GM12878 (cell line): ENCODE measurements at regions of chr11 and their contacts with region 1.

Region 1: GRCh38 chr11:118198370-118198769 is 21.9 kb upstream of the SCN2B start:
- DNase-seq: no peak
- ATAC-seq: peak; percentile 94
- H3K4me3 ChIP-seq: no peak overlapping the region
- H3K27ac ChIP-seq: no peak overlapping the region
- H3K4me1 ChIP-seq: no peaks in the 10 kb centered on the region
- H3K27me3 ChIP-seq: no peaks in the 10 kb centered on the region; a peak in 1 of 4 replicates
- CTCF ChIP-seq: peak; percentile 93 to 96 (median 94)
- EP300 ChIP-seq: 0 out of 4 replicates have a peak, but pooled peaks of 1 of the 2 experiments have one; percentile 14
- POLR2A ChIP-seq: no peak
- RAD21 ChIP-seq: peak; percentile 97

Region 2: DNA sequence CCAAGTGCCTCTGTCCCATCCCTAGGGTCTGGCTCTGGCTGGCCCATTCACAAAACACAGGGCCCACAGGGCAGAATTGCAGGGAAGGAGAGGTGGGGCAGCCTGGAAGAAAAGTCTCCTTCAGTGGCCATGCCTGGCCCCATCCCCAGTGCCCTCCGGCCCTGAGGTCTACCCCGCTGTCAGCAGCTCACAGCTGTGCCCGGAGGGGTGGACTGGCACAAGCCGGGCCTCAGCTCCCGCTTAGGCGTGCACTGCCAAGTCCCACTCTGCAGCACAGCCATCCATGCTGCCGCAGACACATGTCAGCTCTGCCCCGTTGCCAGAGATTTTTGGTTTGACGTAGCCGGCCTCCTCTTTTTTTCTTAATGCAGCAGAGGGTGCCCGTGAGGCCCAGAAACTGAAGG is 18.1 kb before region 1 on chr11:
- CTCF ChIA-PET with region 1: interaction called, 13 read pairs
- POLR2A ChIA-PET with region 1: interaction called, 3 read pairs
- RAD21 ChIA-PET with region 1: interaction called, 8 read pairs
- SMC1A ChIA-PET with region 1: interaction called, 4 read pairs
- in situ Hi-C with region 1: no loop called
- intact Hi-C with region 1: no loop called
- DNase-seq: no peak
- ATAC-seq: peak; percentile 88
- H3K4me3 ChIP-seq: no peak overlapping the region
- H3K27ac ChIP-seq: no peak overlapping the region
- H3K4me1 ChIP-seq: no peaks in the 10 kb centered on the region
- H3K27me3 ChIP-seq: peaks cover 0 to 7% of the 10 kb centered on the region in 2 experiments; a peak in 1 of 4 replicates
- CTCF ChIP-seq: 0 out of 6 replicates have a peak, but pooled peaks of 1 of the 3 experiments have one; percentile 2
- EP300 ChIP-seq: no peak
- POLR2A ChIP-seq: no peak
- RAD21 ChIP-seq: no peak

Region 3: GRCh38 chr11:118227865-118228785 is 29.8 kb after region 1 on chr11:
- CTCF ChIA-PET with region 1: interaction called, 11 read pairs
- POLR2A ChIA-PET with region 1: no interaction called
- RAD21 ChIA-PET with region 1: interaction called, 5 read pairs
- SMC1A ChIA-PET with region 1: interaction called, 9 read pairs
- in situ Hi-C with region 1: no loop called
- intact Hi-C with region 1: no loop called
- DNase-seq: no peak
- ATAC-seq: peak; percentile 85
- H3K4me3 ChIP-seq: no peak overlapping the region
- H3K27ac ChIP-seq: peak overlapping the region; percentile 45; the same call in 1 of the 2 replicates
- H3K4me1 ChIP-seq: peaks cover 30% of the 10 kb centered on the region
- H3K27me3 ChIP-seq: no peaks in the 10 kb centered on the region
- CTCF ChIP-seq: no peak
- EP300 ChIP-seq: peak; percentile 90 to 94
- POLR2A ChIP-seq: no peak
- RAD21 ChIP-seq: no peak

Region 4: GRCh38 chr11:118251858-118252652 is 53.7 kb after region 1 on chr11 and contains the start of gene MPZL3:
- CTCF ChIA-PET with region 1: interaction called, 39 read pairs
- POLR2A ChIA-PET with region 1: interaction called, 5 read pairs
- RAD21 ChIA-PET with region 1: interaction called, 16 read pairs
- SMC1A ChIA-PET with region 1: interaction called, 42 read pairs
- in situ Hi-C with region 1: no loop called
- intact Hi-C with region 1: no loop called
- DNase-seq: peak; percentile 85
- ATAC-seq: peak; percentile 81
- H3K4me3 ChIP-seq: peak within 1 kb of the TSS; percentile 83
- H3K27ac ChIP-seq: peak within 1 kb of the TSS; percentile 87
- H3K4me1 ChIP-seq: no peaks in the 10 kb centered on the region
- H3K27me3 ChIP-seq: no peaks in the 10 kb centered on the region
- CTCF ChIP-seq: no peak
- EP300 ChIP-seq: peak in 1 of 2 experiments; percentile 17; a peak in 1 of 4 replicates
- POLR2A ChIP-seq: peak; percentile 80
- RAD21 ChIP-seq: no peak
- polyA plus RNA-seq, gene MPZL3: 2.1 to 7.5 TPM

Region 5: DNA sequence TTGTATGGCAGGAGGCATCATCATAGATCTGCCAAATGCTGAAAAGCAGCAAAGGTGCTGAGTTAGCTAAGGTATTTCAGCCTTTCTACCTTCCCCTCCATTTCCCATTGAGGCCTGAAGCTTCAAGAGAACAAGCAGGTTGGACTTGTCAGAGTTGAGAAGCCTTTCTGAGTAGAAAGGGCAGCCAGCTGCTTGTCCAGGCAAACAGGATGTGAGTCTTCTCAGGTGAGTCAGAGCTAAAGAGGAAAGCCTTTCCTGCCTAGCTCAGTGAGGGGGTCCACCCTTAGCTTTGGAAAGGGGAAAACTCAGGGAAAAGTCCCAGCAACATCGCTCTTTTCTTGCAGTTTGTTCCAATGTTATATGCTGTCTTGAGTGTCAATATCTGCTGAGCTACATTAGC is 78.9 kb after region 1 on chr11:
- CTCF ChIA-PET with region 1: interaction called, 14 read pairs
- POLR2A ChIA-PET with region 1: interaction called, 4 read pairs
- RAD21 ChIA-PET with region 1: interaction called, 12 read pairs
- SMC1A ChIA-PET with region 1: interaction called, 28 read pairs
- in situ Hi-C with region 1: no loop called
- intact Hi-C with region 1: no loop called
- DNase-seq: no peak
- ATAC-seq: peak; percentile 87
- H3K4me3 ChIP-seq: no peak overlapping the region
- H3K27ac ChIP-seq: no peak overlapping the region
- H3K4me1 ChIP-seq: peaks cover 13% of the 10 kb centered on the region; the same call in 1 of the 2 replicates
- H3K27me3 ChIP-seq: no peaks in the 10 kb centered on the region
- CTCF ChIP-seq: no peak
- EP300 ChIP-seq: no peak
- POLR2A ChIP-seq: no peak
- RAD21 ChIP-seq: no peak

Region 6: DNA sequence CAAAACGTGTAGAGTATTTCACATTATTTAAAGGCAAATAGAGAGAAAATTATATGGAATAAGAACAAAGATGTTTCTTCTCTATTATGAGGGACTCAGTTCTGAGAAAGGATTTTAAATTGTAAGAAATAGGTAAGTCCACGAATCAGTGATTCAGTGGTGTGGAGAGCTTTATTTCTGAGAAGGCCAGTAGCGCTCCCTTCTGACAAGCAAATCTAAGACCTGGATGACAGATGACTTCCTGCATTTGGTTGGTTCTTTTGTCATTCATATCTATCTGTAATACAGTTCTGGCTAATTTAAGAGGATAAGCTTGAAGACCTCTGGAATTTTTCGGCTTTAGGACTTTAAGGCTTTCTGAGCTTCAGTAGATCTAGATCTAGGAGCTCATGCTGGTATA is 113.1 kb after region 1 on chr11:
- CTCF ChIA-PET with region 1: interaction called, 4 read pairs
- POLR2A ChIA-PET with region 1: no interaction called
- RAD21 ChIA-PET with region 1: interaction called, 17 read pairs
- SMC1A ChIA-PET with region 1: interaction called, 6 read pairs
- in situ Hi-C with region 1: no loop called
- intact Hi-C with region 1: no loop called
- DNase-seq: no peak
- ATAC-seq: no peak
- H3K4me3 ChIP-seq: no peak overlapping the region
- H3K27ac ChIP-seq: no peak overlapping the region
- H3K4me1 ChIP-seq: peaks cover 7% of the 10 kb centered on the region; the same call in 1 of the 2 replicates
- H3K27me3 ChIP-seq: no peaks in the 10 kb centered on the region
- CTCF ChIP-seq: no peak
- EP300 ChIP-seq: no peak
- POLR2A ChIP-seq: no peak
- RAD21 ChIP-seq: no peak

Region 7: GRCh38 chr11:118488480-118489109 is 290.2 kb after region 1 on chr11:
- CTCF ChIA-PET with region 1: interaction called, 12 read pairs
- POLR2A ChIA-PET with region 1: no interaction called
- RAD21 ChIA-PET with region 1: interaction called, 10 read pairs
- SMC1A ChIA-PET with region 1: interaction called, 5 read pairs
- in situ Hi-C with region 1: loop called (anchors 5 kb)
- intact Hi-C with region 1: loop called (anchors 5 kb)
- DNase-seq: peak; percentile 35
- ATAC-seq: peak; percentile 84
- H3K4me3 ChIP-seq: no peak overlapping the region
- H3K27ac ChIP-seq: no peak overlapping the region
- H3K4me1 ChIP-seq: no peaks in the 10 kb centered on the region
- H3K27me3 ChIP-seq: no peaks in the 10 kb centered on the region
- CTCF ChIP-seq: peak; percentile 72 to 95 (median 80)
- EP300 ChIP-seq: no peak
- POLR2A ChIP-seq: no peak
- RAD21 ChIP-seq: peak; percentile 96